Activated B cell treated with CpG ODN at 0.5 μM for 24 hours (primary cell): ENCODE measurements at regions of chr22 and their contacts with region 1.

Region 1: GRCh38 chr22:40055143-40055883 is 60.6 kb downstream of the FAM83F start:
- DNase-seq: no peak
- ATAC-seq: peak; percentile 84
- H3K4me3 Mint-ChIP-seq: peak overlapping the region; percentile 53
- H3K27ac Mint-ChIP-seq: peak overlapping the region; percentile 85
- H3K4me1 Mint-ChIP-seq: peaks cover 83% of the 10 kb centered on the region
- H3K27me3 Mint-ChIP-seq: no peaks in the 10 kb centered on the region
- CTCF ChIP-seq: no peak

Region 2: GRCh38 chr22:40094485-40094884 is 39.2 kb after region 1 on chr22:
- CTCF ChIA-PET with region 1: no interaction called
- POLR2A ChIA-PET with region 1: interaction called, 5 read pairs
- intact Hi-C with region 1: loop called (anchors 5 kb)
- DNase-seq: no peak
- ATAC-seq: no peak
- H3K4me3 Mint-ChIP-seq: peak overlapping the region; percentile 55
- H3K27ac Mint-ChIP-seq: peak overlapping the region; percentile 81
- H3K4me1 Mint-ChIP-seq: peaks cover 75% of the 10 kb centered on the region
- H3K27me3 Mint-ChIP-seq: no peaks in the 10 kb centered on the region
- CTCF ChIP-seq: no peak

Region 3: GRCh38 chr22:40156001-40156516 is 100.7 kb after region 1 on chr22:
- CTCF ChIA-PET with region 1: no interaction called
- POLR2A ChIA-PET with region 1: interaction called, 10 read pairs
- intact Hi-C with region 1: no loop called
- DNase-seq: no peak
- ATAC-seq: no peak
- H3K4me3 Mint-ChIP-seq: no peak overlapping the region
- H3K27ac Mint-ChIP-seq: no peak overlapping the region
- H3K4me1 Mint-ChIP-seq: peaks cover 5% of the 10 kb centered on the region
- H3K27me3 Mint-ChIP-seq: no peaks in the 10 kb centered on the region
- CTCF ChIP-seq: no peak

Region 4: DNA sequence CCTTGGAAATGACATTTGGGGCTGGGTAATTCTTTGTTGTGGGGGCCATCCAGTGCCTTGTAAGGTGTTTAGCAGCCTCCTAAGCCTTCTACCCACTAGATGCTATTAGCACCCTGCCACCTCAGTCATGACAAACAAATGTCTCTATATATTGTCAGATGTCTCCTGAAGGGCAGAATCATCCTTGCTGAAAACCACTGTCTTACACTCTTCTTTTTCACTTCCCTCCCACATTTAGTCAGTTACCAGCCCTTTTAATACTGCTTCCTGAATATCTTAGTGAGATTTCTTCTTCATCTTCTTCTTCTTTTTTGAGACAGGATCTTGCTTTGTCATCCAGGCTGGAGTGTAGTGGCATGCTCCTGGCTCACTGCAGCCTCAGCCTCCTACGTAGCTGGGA is 155.5 kb after region 1 on chr22:
- CTCF ChIA-PET with region 1: no interaction called
- POLR2A ChIA-PET with region 1: interaction called, 3 read pairs
- intact Hi-C with region 1: loop called (anchors 10 kb)
- DNase-seq: no peak
- ATAC-seq: peak; percentile 95
- H3K4me3 Mint-ChIP-seq: peak overlapping the region; percentile 33
- H3K27ac Mint-ChIP-seq: peak overlapping the region; percentile 76
- H3K4me1 Mint-ChIP-seq: peaks cover 76% of the 10 kb centered on the region
- H3K27me3 Mint-ChIP-seq: no peaks in the 10 kb centered on the region
- CTCF ChIP-seq: no peak

Region 5: DNA sequence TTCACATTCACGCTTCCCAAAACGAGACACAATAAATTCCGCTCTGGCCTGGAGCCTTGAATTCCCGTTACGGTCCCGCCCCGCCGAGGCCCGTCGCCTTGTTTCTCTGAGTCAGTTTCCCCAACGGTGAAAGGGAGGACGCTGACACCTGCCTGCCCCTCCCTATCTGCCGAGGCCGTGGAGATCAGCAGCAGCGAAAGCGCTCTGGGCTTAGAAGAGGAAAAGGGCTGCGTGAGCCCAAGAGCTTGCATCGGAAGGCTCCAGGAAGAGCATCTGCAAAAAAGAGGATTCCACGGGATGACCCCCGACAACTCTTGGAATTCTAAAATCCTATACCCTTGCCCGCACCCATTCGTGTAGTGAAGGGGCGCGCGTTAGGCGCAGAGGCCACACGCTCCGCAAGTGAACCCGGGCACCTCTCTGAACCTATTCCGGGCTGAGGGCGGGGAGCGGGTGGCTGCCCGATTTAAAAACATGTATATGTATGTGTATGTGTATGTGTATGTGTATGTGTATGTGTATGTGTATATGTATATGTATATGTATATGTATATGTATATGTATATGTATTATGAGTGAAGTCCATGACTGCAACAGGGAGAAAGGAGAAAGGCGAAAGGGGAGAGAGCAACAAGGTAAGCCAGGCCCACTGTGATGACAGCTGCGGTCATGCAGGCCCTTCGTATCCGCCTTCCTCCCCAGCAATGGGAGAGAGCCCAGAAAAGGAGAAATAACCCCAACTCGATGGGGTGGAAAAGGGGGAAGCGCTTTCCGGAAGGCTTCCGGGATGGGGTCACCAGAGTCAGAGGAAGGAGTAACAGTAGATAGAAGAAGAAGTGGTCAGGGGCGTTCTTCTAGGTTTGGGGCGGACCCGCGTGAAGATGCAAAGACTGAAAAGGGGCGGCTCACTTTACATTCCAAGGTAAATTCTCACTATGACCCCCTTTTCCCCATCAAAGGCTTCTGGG is 582.2 kb after region 1 on chr22:
- CTCF ChIA-PET with region 1: no interaction called
- POLR2A ChIA-PET with region 1: no interaction called
- intact Hi-C with region 1: no loop called
- DNase-seq: no peak
- ATAC-seq: peak; percentile 7
- H3K4me3 Mint-ChIP-seq: peak overlapping the region; percentile 98
- H3K27ac Mint-ChIP-seq: peak overlapping the region; percentile 95
- H3K4me1 Mint-ChIP-seq: peaks cover 38% of the 10 kb centered on the region
- H3K27me3 Mint-ChIP-seq: no peaks in the 10 kb centered on the region
- CTCF ChIP-seq: no peak